SK-N-SH (cell line): ENCODE measurements at regions of chr5 and their contacts with region 1.

Region 1: DNA sequence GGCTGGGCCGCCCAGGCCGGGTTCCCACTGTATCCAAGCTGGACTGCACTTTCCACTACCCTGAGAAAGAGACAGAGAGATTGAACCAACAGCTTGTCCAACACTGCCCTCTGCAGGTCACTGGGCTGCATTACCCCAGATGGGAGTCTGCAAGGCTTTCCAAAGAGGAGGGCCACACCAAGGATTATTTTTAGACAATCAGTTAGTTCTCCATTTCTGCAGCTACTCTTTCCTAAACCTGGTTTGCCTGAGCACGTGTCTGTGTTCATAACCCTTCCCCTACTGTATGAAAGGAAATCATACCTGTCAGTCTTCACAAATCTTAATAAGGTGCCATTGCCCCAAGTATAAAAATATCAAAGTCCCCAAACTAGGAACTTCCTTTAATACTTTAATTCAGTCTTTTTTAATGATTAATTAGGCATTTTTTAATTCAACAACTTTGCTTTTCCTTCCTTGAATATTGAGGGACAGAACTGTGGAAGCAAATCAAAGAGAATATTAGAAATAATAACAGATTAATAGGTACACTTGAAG is 13.4 kb upstream of the FGF1 start:
- DNase-seq: peak; percentile 74
- H3K4me3 ChIP-seq: no peak overlapping the region; a peak in 1 of 4 replicates
- H3K27ac ChIP-seq: no peak overlapping the region
- H3K4me1 ChIP-seq: peaks cover 23 to 28% of the 10 kb centered on the region in 2 experiments
- H3K27me3 ChIP-seq: no peaks in the 10 kb centered on the region
- CTCF ChIP-seq: peak; percentile 95
- EP300 ChIP-seq: no peak
- RAD21 ChIP-seq: peak; percentile 100

Region 2: GRCh38 chr5:142151436-142152383 is 547.5 kb before region 1 on chr5:
- CTCF ChIA-PET with region 1: interaction called, 16 read pairs
- POLR2A ChIA-PET with region 1: no interaction called
- DNase-seq: peak; percentile 61
- H3K4me3 ChIP-seq: no peak overlapping the region; a peak in 1 of 4 replicates
- H3K27ac ChIP-seq: peak overlapping the region in 1 of 2 experiments; percentile 79; a peak in 3 of 4 replicates
- H3K4me1 ChIP-seq: peaks cover 0 to 7% of the 10 kb centered on the region in 2 experiments; a peak in 3 of 4 replicates
- H3K27me3 ChIP-seq: no peaks in the 10 kb centered on the region
- CTCF ChIP-seq: peak; percentile 97
- EP300 ChIP-seq: no peak
- RAD21 ChIP-seq: peak; percentile 97

Region 3: GRCh38 chr5:142611154-142611553 is 88.1 kb before region 1 on chr5:
- CTCF ChIA-PET with region 1: interaction called, 244 read pairs
- POLR2A ChIA-PET with region 1: no interaction called
- DNase-seq: peak; percentile 76
- H3K4me3 ChIP-seq: no peak overlapping the region
- H3K27ac ChIP-seq: no peak overlapping the region
- H3K4me1 ChIP-seq: peaks cover 2 to 14% of the 10 kb centered on the region in 2 experiments; a peak in 2 of 4 replicates
- H3K27me3 ChIP-seq: no peaks in the 10 kb centered on the region
- CTCF ChIP-seq: peak; percentile 85
- EP300 ChIP-seq: no peak
- RAD21 ChIP-seq: peak; percentile 98

Region 4: DNA sequence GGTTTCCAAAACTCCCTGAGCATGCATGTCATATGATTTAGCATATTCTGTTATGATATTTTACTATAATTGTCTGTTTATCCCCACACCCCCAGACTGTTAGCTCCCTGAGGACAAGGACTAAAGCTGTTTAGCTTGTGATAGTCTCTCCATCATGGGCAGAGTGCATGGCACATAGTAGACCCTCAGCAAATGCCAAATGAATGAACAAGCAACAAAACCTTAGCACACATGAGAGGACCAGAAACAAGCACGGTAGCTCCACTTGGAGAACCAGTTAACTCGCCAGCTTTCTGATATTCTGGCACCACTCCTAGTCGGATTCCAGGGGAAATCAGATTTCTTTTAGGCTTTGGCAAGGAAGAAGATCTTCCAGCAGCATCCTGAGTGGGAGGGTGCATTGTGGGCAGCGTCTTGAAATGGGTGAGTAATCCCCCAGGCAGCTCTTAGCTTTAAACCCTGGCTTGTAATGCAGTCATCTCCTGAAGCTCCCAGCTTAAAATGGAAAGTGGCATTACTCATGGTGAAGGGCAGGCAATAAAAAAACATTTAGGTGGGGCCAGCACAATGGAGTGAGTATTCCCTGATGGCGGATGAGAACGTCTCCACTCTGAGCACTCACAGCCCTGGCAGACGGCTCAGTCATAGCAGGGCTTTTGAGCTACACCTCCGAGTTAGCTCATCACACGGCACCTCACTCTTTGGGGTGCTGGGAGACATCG is 54.5 kb before region 1 on chr5:
- CTCF ChIA-PET with region 1: interaction called, 668 read pairs
- POLR2A ChIA-PET with region 1: no interaction called
- DNase-seq: no peak
- H3K4me3 ChIP-seq: peak overlapping the region in 1 of 2 experiments; percentile 12; a peak in 1 of 4 replicates
- H3K27ac ChIP-seq: peak overlapping the region; percentile 64 to 92
- H3K4me1 ChIP-seq: peaks cover 8 to 36% of the 10 kb centered on the region in 2 experiments
- H3K27me3 ChIP-seq: no peaks in the 10 kb centered on the region
- CTCF ChIP-seq: no peak
- EP300 ChIP-seq: peak in 1 of 2 experiments; percentile 88; a peak in 2 of 4 replicates
- RAD21 ChIP-seq: no peak

Region 5: DNA sequence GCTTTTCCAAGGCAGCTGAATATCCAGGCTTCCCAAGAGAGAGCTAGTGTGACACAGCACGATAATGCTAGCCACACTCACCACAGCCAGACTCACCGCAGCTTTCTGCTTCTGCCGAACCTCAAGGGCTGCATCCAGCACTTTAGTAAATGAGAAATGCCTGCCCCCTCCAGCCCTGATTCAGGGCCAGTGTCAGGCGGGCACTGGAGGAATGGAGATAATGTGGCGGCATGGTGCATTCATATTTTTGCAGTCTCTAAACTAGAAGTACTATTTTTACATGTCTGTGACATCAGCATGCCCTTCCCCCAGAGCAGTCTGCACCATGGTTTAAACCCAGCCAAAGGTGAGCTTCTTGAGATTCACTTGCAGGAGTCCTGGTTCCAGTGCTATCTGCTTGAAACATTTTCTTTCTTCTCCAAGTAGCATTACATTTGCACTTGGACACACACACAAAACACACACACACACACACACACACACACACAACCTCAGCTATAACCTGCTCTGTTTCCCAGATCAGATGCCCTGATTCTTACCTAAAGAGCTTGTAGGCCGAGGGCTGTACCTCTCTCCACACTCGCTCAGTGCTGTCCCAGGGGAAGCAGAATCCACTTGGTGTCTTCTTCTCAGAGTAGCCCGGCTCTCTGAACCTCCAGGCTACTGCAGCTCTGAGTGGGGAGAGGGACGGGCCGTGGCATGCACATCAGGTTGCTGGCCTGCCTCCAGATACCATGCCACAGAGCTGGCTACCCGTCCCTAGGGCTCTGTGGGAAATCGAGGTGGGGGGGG is 13.6 kb before region 1 on chr5 and contains the start of gene FGF1:
- CTCF ChIA-PET with region 1: interaction called, 66 read pairs
- POLR2A ChIA-PET with region 1: no interaction called
- DNase-seq: peak; percentile 76
- H3K4me3 ChIP-seq: no peak within 1 kb of the TSS
- H3K27ac ChIP-seq: peak within 1 kb of the TSS in 1 of 2 experiments; percentile 95; a peak in 2 of 4 replicates
- H3K4me1 ChIP-seq: peaks cover 15 to 52% of the 10 kb centered on the region in 2 experiments; a peak in 3 of 4 replicates
- H3K27me3 ChIP-seq: no peaks in the 10 kb centered on the region
- CTCF ChIP-seq: no peak
- EP300 ChIP-seq: no peak
- RAD21 ChIP-seq: no peak
- polyA plus RNA-seq, gene FGF1: 5.3 and 5.9 TPM in 2 replicates